ENCODE measurements at regions of chr22 and their contacts with region 1.

Region 1: GRCh38 chr22:37849089-37849751 is at the start of gene EIF3L:
- DNase-seq: peak; percentile 89
- H3K4me3 Mint-ChIP-seq: peak within 1 kb of the TSS; percentile 97
- H3K27ac Mint-ChIP-seq: peak within 1 kb of the TSS; percentile 96
- H3K4me1 Mint-ChIP-seq: peaks cover 49% of the 10 kb centered on the region
- H3K27me3 Mint-ChIP-seq: no peaks in the 10 kb centered on the region
- total RNA-seq, gene EIF3L: 433 and 441 TPM in 2 replicates

Region 2: GRCh38 chr22:37807410-37808293 is 41.6 kb before region 1 on chr22 and contains the start of gene GCAT:
- intact Hi-C with region 1: loop called (anchors 1 kb)
- DNase-seq: peak; percentile 90
- H3K4me3 Mint-ChIP-seq: peak within 1 kb of the TSS; percentile 82
- H3K27ac Mint-ChIP-seq: peak within 1 kb of the TSS; percentile 58
- H3K4me1 Mint-ChIP-seq: peaks cover 44% of the 10 kb centered on the region
- H3K27me3 Mint-ChIP-seq: peaks cover 13% of the 10 kb centered on the region
- total RNA-seq, gene GCAT: 28.5 and 28.9 TPM in 2 replicates

Region 3: GRCh38 chr22:37862570-37863325 is 13.5 kb after region 1 on chr22:
- intact Hi-C with region 1: loop called (anchors 1 kb)
- DNase-seq: no peak
- H3K4me3 Mint-ChIP-seq: no peak overlapping the region
- H3K27ac Mint-ChIP-seq: no peak overlapping the region
- H3K4me1 Mint-ChIP-seq: peaks cover 7% of the 10 kb centered on the region
- H3K27me3 Mint-ChIP-seq: no peaks in the 10 kb centered on the region

Region 4: DNA sequence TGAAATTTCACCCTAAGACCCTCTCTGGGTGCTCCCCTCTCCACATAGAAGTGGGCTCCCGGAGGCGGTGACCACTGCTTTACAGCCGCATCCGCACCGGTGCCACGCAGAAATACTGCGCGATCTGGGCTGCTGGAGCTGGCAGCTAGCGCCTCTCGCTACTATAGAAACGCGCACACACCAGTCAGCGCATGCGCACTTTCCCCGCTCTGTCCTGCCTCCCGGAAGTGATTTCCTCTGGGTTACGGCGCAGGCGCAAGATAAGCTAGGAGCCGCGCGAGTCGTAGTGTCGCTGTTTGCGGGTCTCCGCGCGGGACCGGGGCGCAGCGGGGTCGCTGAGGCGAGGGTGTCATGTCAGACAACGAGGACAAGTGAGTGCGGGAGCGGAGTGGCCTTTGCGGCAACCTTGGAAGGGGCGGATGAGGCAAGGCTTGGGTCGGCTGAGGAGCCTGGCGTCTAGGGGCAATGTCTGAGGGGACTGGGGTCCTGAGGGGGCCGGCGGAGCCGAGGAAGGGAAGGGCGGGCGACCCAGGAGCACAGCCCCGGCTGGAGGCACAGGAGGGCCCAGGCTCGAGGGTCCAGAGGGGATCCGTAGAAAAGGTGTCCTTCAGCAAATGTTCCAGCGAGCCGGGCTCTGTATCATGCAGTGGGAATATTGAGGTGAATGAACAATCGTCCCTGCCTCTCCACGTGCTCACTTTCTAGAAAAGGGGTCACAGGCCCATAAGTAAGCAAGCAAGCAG is 104.4 kb after region 1 on chr22 and contains the starts of genes C22orf23 and POLR2F:
- intact Hi-C with region 1: loop called (anchors 2 kb)
- DNase-seq: peak; percentile 94
- H3K4me3 Mint-ChIP-seq: peak within 1 kb of the TSS; percentile 99
- H3K27ac Mint-ChIP-seq: peak within 1 kb of the TSS; percentile 92
- H3K4me1 Mint-ChIP-seq: peaks cover 26% of the 10 kb centered on the region
- H3K27me3 Mint-ChIP-seq: peaks cover 7% of the 10 kb centered on the region
- total RNA-seq, gene C22orf23: 0.61 TPM in 1 of 2 replicates, not detected in the other
- total RNA-seq, gene POLR2F: 102 and 120 TPM in 2 replicates

Measured in activated T-helper 1 cell treated with anti-CD3 and anti-CD28 coated beads, Interleukin-12 subunit alpha, Interleukin-12 subunit beta, Interleukin-2, Interleukin-4 antibody, amounts not matched to agents 30 ng/mL and 10 ng/mL and 1 ng/mL, durations not matched to agents 14 hours and 24 hours and 36 hours (primary cell).